Vagina (tissue), 2 donors: ENCODE measurements at regions of chr14 and their contacts with region 1.

Region 1: GRCh38 chr14:88492272-88493089 is 62.3 kb downstream of the PTPN21 start:
- DNase-seq: no peak
- H3K4me3 ChIP-seq: no peak overlapping the region
- H3K27ac ChIP-seq: no peak overlapping the region
- H3K4me1 ChIP-seq: no peaks in the 10 kb centered on the region
- H3K27me3 ChIP-seq: no peaks in the 10 kb centered on the region
- CTCF ChIP-seq: peak; percentile 77 to 84 (median 79)
- POLR2A ChIP-seq: no peak

Region 2: DNA sequence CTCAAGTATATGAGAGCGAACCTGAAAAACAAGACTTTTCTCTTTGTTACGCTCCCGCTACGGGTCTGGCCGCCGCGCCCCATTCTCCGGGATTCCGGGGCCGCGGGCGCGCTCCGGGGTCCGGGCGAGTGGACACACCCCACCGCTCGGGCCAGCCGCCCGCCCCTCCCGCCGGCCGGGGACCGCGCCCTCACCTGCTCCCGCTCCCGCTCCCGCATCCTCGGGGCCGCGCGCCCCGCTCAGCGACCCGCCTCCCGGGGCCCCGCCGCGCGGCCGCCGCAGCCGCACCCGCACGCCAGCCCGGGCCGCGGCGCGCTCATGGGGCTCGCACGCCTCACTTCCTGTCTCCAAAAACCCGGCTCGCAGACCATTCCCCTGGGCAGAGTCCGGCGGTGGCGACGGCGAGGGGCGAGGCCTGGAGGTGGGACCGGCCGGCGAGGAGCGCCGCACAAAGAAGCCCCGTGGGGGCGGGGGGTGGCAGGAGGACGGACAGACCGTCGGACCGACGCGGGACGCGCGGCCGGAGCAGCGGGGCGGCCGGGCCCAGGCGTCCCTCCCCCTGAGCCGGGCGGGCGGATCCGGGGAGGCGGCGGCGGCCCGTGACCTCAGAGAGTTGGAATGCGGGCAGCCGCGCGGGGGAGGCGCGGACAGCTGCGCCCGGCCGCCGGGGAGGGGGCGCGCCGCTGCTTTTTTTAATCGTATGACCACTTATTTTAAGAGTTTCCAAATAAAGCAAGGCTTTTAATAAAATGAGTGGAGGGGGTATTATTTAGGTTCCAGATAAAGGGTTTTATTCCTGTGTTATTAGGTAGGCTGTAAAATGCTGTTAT is 62.2 kb after region 1 on chr14 and contains the start of gene PTPN21:
- intact Hi-C with region 1: loop called (anchors 5 kb)
- DNase-seq: no peak
- H3K4me3 ChIP-seq: peak within 1 kb of the TSS; percentile 67 to 82
- H3K27ac ChIP-seq: peak within 1 kb of the TSS; percentile 83
- H3K4me1 ChIP-seq: peaks cover 44% of the 10 kb centered on the region
- H3K27me3 ChIP-seq: no peaks in the 10 kb centered on the region
- CTCF ChIP-seq: no peak
- POLR2A ChIP-seq: no peak
- total RNA-seq, gene PTPN21: 15.2 TPM